ENCODE measurements at regions of chr12 and their contacts with region 1.

Region 1: GRCh38 chr12:123457980-123458783 is at the start of gene SNRNP35:
- DNase-seq: peak; percentile 89
- H3K4me3 ChIP-seq: peak within 1 kb of the TSS; percentile 50 to 96 (median 56)
- H3K27ac ChIP-seq: peak within 1 kb of the TSS; percentile 93
- H3K4me1 ChIP-seq: no peaks in the 10 kb centered on the region
- H3K27me3 ChIP-seq: no peaks in the 10 kb centered on the region
- CTCF ChIP-seq: no peak
- POLR2A ChIP-seq: peak; percentile 83
- total RNA-seq, gene SNRNP35: 27.9 and 30.6 TPM in 2 replicates

Region 2: DNA sequence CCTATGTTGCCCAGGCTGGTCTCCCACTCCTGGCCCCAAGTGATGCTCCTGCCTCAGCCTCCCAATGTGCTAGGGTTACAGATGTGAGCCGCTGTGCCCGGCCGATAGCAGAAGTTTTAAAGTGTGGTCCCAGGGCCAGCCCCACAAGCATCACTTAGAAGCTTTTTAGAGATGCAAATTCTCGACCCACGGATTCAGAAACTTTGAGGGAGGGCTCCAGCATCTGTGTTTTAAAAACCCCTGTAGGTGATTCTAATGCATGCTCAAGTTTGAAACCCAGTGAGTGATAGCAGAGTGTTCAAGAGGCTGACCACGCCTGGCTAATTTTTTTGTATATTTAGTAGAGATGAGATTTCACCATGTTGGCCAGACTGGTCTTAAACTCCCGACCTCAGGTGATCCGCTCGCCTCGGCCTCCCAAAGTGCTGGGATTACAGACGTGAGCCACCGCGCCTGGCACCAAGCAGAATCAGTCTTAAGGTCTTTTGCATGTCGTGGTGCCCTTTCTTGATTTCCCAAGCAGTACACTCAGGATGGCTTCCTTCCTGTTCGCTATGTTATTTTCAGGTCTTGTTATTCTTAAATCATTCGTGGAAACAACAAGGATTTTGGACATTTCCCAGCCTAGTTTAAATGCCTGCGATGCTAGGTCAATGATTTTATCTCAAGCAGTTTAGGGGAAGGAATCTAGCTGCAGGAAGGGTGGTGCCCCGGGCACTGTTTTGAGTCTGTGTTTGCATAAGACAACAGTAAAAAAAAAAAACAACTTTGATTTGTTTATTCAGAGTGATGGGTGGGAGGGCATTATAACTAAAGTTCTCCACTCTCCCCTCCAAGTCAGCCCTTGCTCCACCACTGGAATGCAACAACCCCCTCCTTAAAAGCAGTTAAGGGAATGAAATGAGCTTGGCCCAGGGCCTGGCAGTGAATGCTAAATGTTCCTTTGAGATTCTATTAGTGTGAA is 12.5 kb before region 1 on chr12:
- CTCF ChIA-PET with region 1: no interaction called
- POLR2A ChIA-PET with region 1: no interaction called
- dilution Hi-C with region 1: no loop called
- intact Hi-C with region 1: loop called (anchors 1 kb)
- DNase-seq: peak; percentile 94
- H3K4me3 ChIP-seq: no peak overlapping the region
- H3K27ac ChIP-seq: peak overlapping the region; percentile 68
- H3K4me1 ChIP-seq: peaks cover 22% of the 10 kb centered on the region
- H3K27me3 ChIP-seq: no peaks in the 10 kb centered on the region
- CTCF ChIP-seq: no peak
- POLR2A ChIP-seq: peak; percentile 15

Region 3: GRCh38 chr12:123468562-123469185 is 10.5 kb after region 1 on chr12:
- CTCF ChIA-PET with region 1: interaction called, 11 read pairs
- POLR2A ChIA-PET with region 1: interaction called, 5 read pairs
- dilution Hi-C with region 1: no loop called
- intact Hi-C with region 1: no loop called
- DNase-seq: no peak
- H3K4me3 ChIP-seq: no peak overlapping the region
- H3K27ac ChIP-seq: no peak overlapping the region
- H3K4me1 ChIP-seq: no peaks in the 10 kb centered on the region
- H3K27me3 ChIP-seq: no peaks in the 10 kb centered on the region
- CTCF ChIP-seq: no peak
- POLR2A ChIP-seq: no peak

Region 4: GRCh38 chr12:123478762-123479161 is 20.6 kb after region 1 on chr12:
- CTCF ChIA-PET with region 1: no interaction called
- POLR2A ChIA-PET with region 1: no interaction called
- dilution Hi-C with region 1: no loop called
- intact Hi-C with region 1: loop called (anchors 1 kb)
- DNase-seq: peak; percentile 94
- H3K4me3 ChIP-seq: no peak overlapping the region
- H3K27ac ChIP-seq: peak overlapping the region; percentile 83
- H3K4me1 ChIP-seq: peaks cover 20% of the 10 kb centered on the region
- H3K27me3 ChIP-seq: no peaks in the 10 kb centered on the region
- CTCF ChIP-seq: no peak
- POLR2A ChIP-seq: no peak

Region 5: DNA sequence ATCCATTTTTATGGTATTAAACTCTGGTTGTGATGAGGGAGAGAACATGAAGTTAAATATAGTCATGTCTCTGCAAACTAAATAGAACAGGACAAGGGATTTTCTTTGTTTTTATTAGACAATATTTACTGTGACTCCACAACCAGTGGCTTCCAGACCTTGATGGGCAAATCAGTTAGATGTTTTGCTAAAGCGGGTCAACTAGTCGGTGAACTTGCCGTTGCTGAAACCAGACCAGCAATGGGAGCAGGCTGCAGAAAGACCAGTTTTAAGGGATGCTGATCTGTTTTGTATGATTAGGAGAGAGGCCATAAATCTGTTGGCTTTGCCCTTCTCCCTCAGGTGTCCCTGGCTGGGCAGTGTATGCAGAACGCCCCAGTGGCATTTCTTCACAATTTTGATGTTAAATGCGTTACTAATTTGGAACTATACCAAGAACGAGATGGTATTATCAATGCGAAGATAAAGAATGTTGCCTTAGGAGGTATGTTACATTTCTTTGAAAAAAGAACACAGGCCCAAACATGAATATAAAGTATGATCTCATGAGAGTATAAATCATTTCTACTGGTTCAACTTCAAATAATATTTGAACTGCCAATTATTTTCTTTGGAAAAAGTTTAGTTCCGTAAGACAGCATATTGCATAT is 232.1 kb after region 1 on chr12:
- CTCF ChIA-PET with region 1: no interaction called
- POLR2A ChIA-PET with region 1: no interaction called
- dilution Hi-C with region 1: no loop called
- intact Hi-C with region 1: no loop called
- DNase-seq: no peak
- H3K4me3 ChIP-seq: no peak overlapping the region
- H3K27ac ChIP-seq: no peak overlapping the region
- H3K4me1 ChIP-seq: no peaks in the 10 kb centered on the region
- H3K27me3 ChIP-seq: no peaks in the 10 kb centered on the region
- CTCF ChIP-seq: no peak
- POLR2A ChIP-seq: no peak

Region 6: GRCh38 chr12:123713398-123713797 is 255.2 kb after region 1 on chr12:
- CTCF ChIA-PET with region 1: no interaction called
- POLR2A ChIA-PET with region 1: no interaction called
- dilution Hi-C with region 1: no loop called
- intact Hi-C with region 1: loop called (anchors 2 kb)
- DNase-seq: peak; percentile 36
- H3K4me3 ChIP-seq: peak overlapping the region; percentile 87 to 98 (median 90)
- H3K27ac ChIP-seq: no peak overlapping the region
- H3K4me1 ChIP-seq: peaks cover 8% of the 10 kb centered on the region
- H3K27me3 ChIP-seq: no peaks in the 10 kb centered on the region
- CTCF ChIP-seq: no peak
- POLR2A ChIP-seq: no peak

Measured in endothelial cell of umbilical vein (primary cell).